ENCODE measurements at regions of chr18 and their contacts with region 1.

Region 1: DNA sequence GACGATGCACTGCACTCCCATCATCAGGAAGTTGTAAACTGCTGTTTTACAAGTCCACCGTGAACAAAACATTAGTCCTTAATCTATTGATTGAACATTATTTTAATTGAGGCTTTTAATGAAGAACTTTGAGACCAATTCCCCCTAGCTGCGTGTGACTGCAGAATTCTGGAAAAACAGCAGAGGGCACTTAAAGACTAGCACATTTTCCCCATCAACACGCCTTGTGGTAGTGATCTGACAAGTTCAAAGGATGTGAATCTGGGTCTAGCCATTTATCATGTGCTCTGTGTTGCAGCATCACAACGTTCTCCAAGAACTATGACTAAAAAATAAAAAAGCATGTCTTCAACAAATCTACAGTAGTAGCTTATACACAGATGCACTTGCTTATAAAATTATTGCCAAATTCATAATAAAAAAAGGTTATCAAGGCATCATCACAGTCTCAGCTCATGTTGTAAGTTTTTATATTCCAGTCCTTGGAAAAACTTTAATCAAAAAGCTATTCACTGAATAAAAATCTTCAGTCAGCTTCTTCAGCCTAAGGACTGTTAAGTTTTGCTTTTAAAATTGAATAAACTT is 35.8 kb downstream of the SKOR2 start:
- DNase-seq: no peak
- ATAC-seq: peak; percentile 45

Region 2: GRCh38 chr18:47748847-47749599 is 533.4 kb after region 1 on chr18:
- intact Hi-C with region 1: loop called (anchors 5 kb)
- DNase-seq: peak; percentile 91
- ATAC-seq: peak; percentile 96